Activated T-helper 2 cell treated with anti-CD3 and anti-CD28 coated beads, Interferon-gamma antibody, Interleukin-2, Interleukin-4, amounts not matched to agents 10 μg/mL and 5 μg/mL and 100 μg/mL, durations not matched to agents 14 hours and 24 hours and 36 hours (primary cell): ENCODE measurements at regions of chr11 and their contacts with region 1.

Region 1: DNA sequence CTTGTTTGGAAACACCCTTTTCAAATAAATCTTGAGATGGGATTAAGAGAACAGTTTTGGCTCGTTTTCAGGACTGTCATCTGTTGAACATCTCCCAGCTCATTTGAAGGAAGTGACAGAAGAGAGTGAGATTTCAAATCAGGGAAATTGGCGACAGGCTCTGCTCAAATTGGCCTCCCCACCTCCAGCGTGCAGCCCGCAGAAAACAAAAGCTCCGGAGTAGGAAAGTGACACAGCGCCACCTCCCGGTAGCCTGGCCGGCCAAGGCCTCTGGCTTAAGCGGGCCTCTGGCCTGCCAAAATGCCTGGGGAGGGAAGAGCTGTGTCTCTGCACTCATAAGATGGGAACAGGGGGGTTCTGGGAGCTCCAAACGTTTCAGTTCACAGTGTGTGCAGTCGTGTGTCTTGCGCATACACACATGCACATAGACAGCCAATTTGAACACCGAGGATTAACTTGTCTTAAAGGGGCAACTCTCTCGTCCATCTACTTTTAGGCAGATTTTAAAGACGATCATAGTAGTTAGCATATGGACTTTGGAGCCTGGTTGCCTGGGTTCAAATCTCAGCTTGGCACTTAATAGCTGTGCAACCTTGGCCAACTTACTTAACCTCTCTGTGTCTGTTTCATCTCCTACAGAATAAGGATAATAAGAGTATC is 132.7 kb upstream of the RCN1 start:
- DNase-seq: peak; percentile 44
- H3K4me3 Mint-ChIP-seq: no peak overlapping the region
- H3K27ac Mint-ChIP-seq: no peak overlapping the region
- H3K4me1 Mint-ChIP-seq: peaks cover 3% of the 10 kb centered on the region
- H3K27me3 Mint-ChIP-seq: no peaks in the 10 kb centered on the region

Region 2: DNA sequence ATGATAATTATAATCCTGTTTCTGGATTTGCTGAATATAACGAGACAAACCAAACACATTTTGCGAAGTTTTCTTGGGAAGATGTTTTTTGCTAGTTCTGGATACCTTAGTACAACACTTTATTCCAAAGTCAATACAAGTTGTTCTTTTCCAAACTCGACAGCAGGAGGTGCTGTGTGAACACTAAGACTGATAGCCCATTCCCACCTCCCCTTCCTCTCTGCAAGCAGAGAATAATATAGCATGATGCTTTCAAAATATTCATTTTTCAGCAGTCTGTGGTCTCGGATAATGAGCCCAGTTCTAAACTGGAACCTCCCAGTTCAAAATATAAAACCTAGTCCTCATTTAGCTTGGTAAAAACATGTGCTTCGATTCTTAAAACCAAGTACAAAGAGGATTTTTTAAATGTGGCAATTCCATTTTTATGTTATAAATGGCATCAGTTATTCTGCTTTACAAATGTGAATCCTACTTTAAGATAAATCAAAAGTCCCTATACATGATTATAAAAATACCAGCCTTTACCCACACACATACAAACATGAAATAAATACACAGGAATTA is 717.8 kb before region 1 on chr11:
- intact Hi-C with region 1: loop called (anchors 5 kb)
- DNase-seq: no peak
- H3K4me3 Mint-ChIP-seq: no peak overlapping the region
- H3K27ac Mint-ChIP-seq: no peak overlapping the region
- H3K4me1 Mint-ChIP-seq: no peaks in the 10 kb centered on the region
- H3K27me3 Mint-ChIP-seq: no peaks in the 10 kb centered on the region

Region 3: GRCh38 chr11:32090545-32091373 is 132.6 kb after region 1 on chr11 and contains the start of gene RCN1:
- intact Hi-C with region 1: no loop called
- DNase-seq: peak; percentile 33
- H3K4me3 Mint-ChIP-seq: peak within 1 kb of the TSS; percentile 79
- H3K27ac Mint-ChIP-seq: peak within 1 kb of the TSS; percentile 77
- H3K4me1 Mint-ChIP-seq: peaks cover 33% of the 10 kb centered on the region
- H3K27me3 Mint-ChIP-seq: peaks cover 17% of the 10 kb centered on the region
- total RNA-seq, gene RCN1: 27.5 and 32.6 TPM in 2 replicates